ENCODE measurements at regions of chr7 and their contacts with region 1.

Region 1: DNA sequence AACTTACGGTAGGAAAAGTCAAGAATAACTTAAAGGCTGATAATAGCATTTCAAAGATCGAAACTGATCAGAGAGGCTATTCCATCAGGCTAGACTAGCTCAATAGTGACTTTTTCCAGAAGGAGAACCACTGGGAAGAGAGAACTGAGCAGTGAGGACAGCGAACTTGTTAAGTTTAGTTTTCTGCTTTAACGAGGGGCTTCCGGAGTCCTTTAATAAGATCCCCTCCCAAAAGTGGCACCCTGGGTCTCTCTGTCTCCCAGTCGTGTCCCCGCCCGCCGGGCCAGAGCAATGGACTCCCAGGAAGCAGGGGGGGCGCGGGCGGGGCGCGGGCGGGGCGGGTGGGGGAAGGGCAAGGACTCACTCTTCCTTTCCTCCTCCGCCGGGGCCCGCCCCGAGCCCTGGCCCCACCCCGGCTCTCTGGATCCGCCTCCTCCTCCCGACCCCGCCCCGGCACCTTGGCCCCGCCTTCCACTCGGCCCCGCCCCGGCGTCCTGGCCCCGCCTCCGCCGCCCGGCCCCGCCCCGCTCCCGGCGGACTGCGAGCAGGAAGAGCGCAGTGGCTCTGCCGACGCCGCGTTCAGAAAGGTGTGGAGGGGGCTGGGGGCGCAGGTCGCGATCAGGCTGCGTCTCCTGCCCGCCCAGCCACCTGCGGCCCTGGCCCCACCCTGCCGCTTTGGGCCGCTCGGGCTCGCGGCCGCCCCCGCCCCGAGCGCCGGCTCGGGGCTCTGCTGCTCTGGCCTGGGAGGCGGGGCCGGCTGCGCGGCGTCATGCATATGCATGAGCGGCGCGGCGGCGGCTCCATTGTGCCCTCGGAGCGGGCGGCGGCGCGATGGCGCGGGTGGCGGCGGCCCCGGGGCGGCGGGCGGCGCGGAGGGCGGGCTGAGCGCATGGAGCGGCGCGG is at the start of gene ZMIZ2:
- DNase-seq: no peak
- ATAC-seq: peak; percentile 63
- H3K4me3 ChIP-seq: peak within 1 kb of the TSS; percentile 92
- H3K27ac ChIP-seq: peak within 1 kb of the TSS; percentile 92
- H3K4me1 ChIP-seq: peaks cover 17% of the 10 kb centered on the region
- H3K27me3 ChIP-seq: no peaks in the 10 kb centered on the region
- CTCF ChIP-seq: no peak
- EP300 ChIP-seq: no peak
- POLR2A ChIP-seq: peak; percentile 62; the same call in 1 of the 2 replicates
- RAD21 ChIP-seq: no peak
- polyA plus RNA-seq, gene ZMIZ2: 0.71 to 1.5 TPM

Region 2: GRCh38 chr7:44581879-44582603 is 166.3 kb before region 1 on chr7 and contains the start of gene TMED4:
- CTCF ChIA-PET with region 1: interaction called, 4 read pairs
- POLR2A ChIA-PET with region 1: interaction called, 13 read pairs
- RAD21 ChIA-PET with region 1: interaction called, 3 read pairs
- SMC1A ChIA-PET with region 1: interaction called, 4 read pairs
- in situ Hi-C with region 1: no loop called
- intact Hi-C with region 1: loop called (anchors 5 kb)
- DNase-seq: peak; percentile 97
- ATAC-seq: peak; percentile 92
- H3K4me3 ChIP-seq: peak within 1 kb of the TSS; percentile 83
- H3K27ac ChIP-seq: peak within 1 kb of the TSS; percentile 86
- H3K4me1 ChIP-seq: peaks cover 4% of the 10 kb centered on the region; the same call in 1 of the 2 replicates
- H3K27me3 ChIP-seq: no peaks in the 10 kb centered on the region
- CTCF ChIP-seq: no peak
- EP300 ChIP-seq: no peak
- POLR2A ChIP-seq: peak; percentile 98
- RAD21 ChIP-seq: no peak
- polyA plus RNA-seq, gene TMED4: 20.8 to 21.0 TPM

Region 3: DNA sequence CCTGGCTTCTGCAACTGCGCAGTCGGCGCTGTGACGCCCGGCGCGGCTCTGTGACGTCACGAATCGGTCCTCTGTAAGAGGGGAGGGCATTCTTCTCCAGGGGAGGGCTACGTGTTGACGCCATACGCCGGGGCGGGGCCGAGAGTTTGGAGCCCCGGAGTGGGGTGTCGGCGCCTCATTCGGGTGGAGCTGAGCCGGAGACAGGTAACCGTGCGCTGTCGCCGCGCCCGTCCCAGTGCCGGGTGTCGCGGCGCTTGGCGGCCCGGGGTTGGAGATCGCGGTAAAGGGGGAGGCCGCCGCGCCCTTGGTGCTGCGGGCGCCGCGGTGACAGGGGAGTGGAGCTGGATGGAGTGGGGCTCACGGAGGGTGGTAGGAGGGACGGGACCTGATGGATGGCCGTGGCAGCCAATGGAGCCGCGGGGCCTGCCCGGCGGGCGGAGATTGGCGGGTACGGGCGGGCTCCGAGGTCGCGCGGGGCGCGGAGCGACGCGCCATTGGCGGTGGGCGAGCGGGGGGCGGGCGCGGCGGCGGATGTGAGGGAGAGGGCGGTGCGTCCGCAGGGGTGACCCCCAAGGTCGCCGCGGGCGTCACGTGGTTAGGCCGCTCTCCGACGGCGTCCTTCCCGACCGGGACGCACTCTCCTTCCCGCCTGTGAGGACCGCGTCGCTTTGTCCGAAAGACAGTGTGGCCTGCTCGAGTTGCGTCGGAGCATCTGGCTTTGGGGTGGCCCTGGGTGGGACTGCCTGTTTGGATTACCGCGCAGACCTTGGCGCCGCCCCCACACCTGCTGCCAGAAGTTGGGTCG is 141.6 kb before region 1 on chr7 and contains the start of gene OGDH:
- CTCF ChIA-PET with region 1: no interaction called
- POLR2A ChIA-PET with region 1: interaction called, 48 read pairs
- RAD21 ChIA-PET with region 1: interaction called, 36 read pairs
- SMC1A ChIA-PET with region 1: interaction called, 21 read pairs
- in situ Hi-C with region 1: no loop called
- intact Hi-C with region 1: loop called (anchors 1 kb)
- DNase-seq: peak; percentile 87
- ATAC-seq: peak; percentile 98
- H3K4me3 ChIP-seq: peak within 1 kb of the TSS; percentile 91
- H3K27ac ChIP-seq: peak within 1 kb of the TSS; percentile 93
- H3K4me1 ChIP-seq: peaks cover 19% of the 10 kb centered on the region
- H3K27me3 ChIP-seq: no peaks in the 10 kb centered on the region
- CTCF ChIP-seq: no peak
- EP300 ChIP-seq: peak in 1 of 2 experiments; percentile 12; a peak in 1 of 4 replicates
- POLR2A ChIP-seq: peak; percentile 95
- RAD21 ChIP-seq: no peak
- polyA plus RNA-seq, gene OGDH: 4.1 to 4.2 TPM

Region 4: GRCh38 chr7:44638611-44639557 is 109.4 kb before region 1 on chr7:
- CTCF ChIA-PET with region 1: interaction called, 17 read pairs
- POLR2A ChIA-PET with region 1: interaction called, 55 read pairs
- RAD21 ChIA-PET with region 1: interaction called, 107 read pairs
- SMC1A ChIA-PET with region 1: interaction called, 79 read pairs
- in situ Hi-C with region 1: no loop called
- intact Hi-C with region 1: loop called (anchors 1 kb)
- DNase-seq: peak; percentile 80
- ATAC-seq: peak; percentile 88
- H3K4me3 ChIP-seq: peak overlapping the region; percentile 38; the same call in 1 of the 2 replicates
- H3K27ac ChIP-seq: peak overlapping the region; percentile 98
- H3K4me1 ChIP-seq: peaks cover 58% of the 10 kb centered on the region
- H3K27me3 ChIP-seq: no peaks in the 10 kb centered on the region
- CTCF ChIP-seq: peak; percentile 1 to 17 (median 8); a peak in 1 of 6 replicates
- EP300 ChIP-seq: peak; percentile 87 to 91
- POLR2A ChIP-seq: peak; percentile 45
- RAD21 ChIP-seq: peak; percentile 46

Region 5: GRCh38 chr7:44769776-44770662 is 21.7 kb after region 1 on chr7:
- CTCF ChIA-PET with region 1: interaction called, 11 read pairs
- POLR2A ChIA-PET with region 1: interaction called, 33 read pairs
- RAD21 ChIA-PET with region 1: interaction called, 40 read pairs
- SMC1A ChIA-PET with region 1: interaction called, 9 read pairs
- in situ Hi-C with region 1: no loop called
- intact Hi-C with region 1: loop called (anchors 2 kb)
- DNase-seq: peak; percentile 80
- ATAC-seq: peak; percentile 88
- H3K4me3 ChIP-seq: 0 out of 2 replicates have a peak overlapping the region, but pooled peaks have one; percentile 14
- H3K27ac ChIP-seq: no peak overlapping the region
- H3K4me1 ChIP-seq: peaks cover 36% of the 10 kb centered on the region
- H3K27me3 ChIP-seq: no peaks in the 10 kb centered on the region
- CTCF ChIP-seq: no peak
- EP300 ChIP-seq: no peak
- POLR2A ChIP-seq: no peak
- RAD21 ChIP-seq: no peak

Region 6: GRCh38 chr7:44885394-44886317 is 137.4 kb after region 1 on chr7 and contains the start of gene PURB:
- CTCF ChIA-PET with region 1: no interaction called
- POLR2A ChIA-PET with region 1: interaction called, 11 read pairs
- RAD21 ChIA-PET with region 1: interaction called, 3 read pairs
- SMC1A ChIA-PET with region 1: no interaction called
- in situ Hi-C with region 1: no loop called
- intact Hi-C with region 1: no loop called
- DNase-seq: peak; percentile 79
- ATAC-seq: peak; percentile 88
- H3K4me3 ChIP-seq: peak within 1 kb of the TSS; percentile 99
- H3K27ac ChIP-seq: peak within 1 kb of the TSS; percentile 99
- H3K4me1 ChIP-seq: 0 out of 2 replicates have a peak, but pooled peaks cover 3% of the 10 kb centered on the region
- H3K27me3 ChIP-seq: no peaks in the 10 kb centered on the region
- CTCF ChIP-seq: no peak; a peak in 1 of 6 replicates
- EP300 ChIP-seq: peak; percentile 62 to 64; a peak in 3 of 4 replicates
- POLR2A ChIP-seq: peak; percentile 91
- RAD21 ChIP-seq: no peak
- polyA plus RNA-seq, gene PURB: 2.5 to 2.8 TPM

Region 7: GRCh38 chr7:44969701-44970522 is 221.6 kb after region 1 on chr7:
- CTCF ChIA-PET with region 1: no interaction called
- POLR2A ChIA-PET with region 1: no interaction called
- RAD21 ChIA-PET with region 1: no interaction called
- SMC1A ChIA-PET with region 1: no interaction called
- in situ Hi-C with region 1: no loop called
- intact Hi-C with region 1: no loop called
- DNase-seq: no peak
- ATAC-seq: no peak
- H3K4me3 ChIP-seq: no peak overlapping the region
- H3K27ac ChIP-seq: no peak overlapping the region
- H3K4me1 ChIP-seq: 0 out of 2 replicates have a peak, but pooled peaks cover 2% of the 10 kb centered on the region
- H3K27me3 ChIP-seq: no peaks in the 10 kb centered on the region
- CTCF ChIP-seq: no peak
- EP300 ChIP-seq: no peak
- POLR2A ChIP-seq: peak; percentile 18; the same call in 1 of the 2 replicates
- RAD21 ChIP-seq: no peak

Measured in GM12878 (cell line).